ENCODE measurements at regions of chr11 and their contacts with region 1.

Region 1: GRCh38 chr11:727859-728748 is 19.2 kb upstream of the TALDO1 start:
- DNase-seq: peak; percentile 72
- H3K4me3 Mint-ChIP-seq: no peak overlapping the region
- H3K27ac Mint-ChIP-seq: no peak overlapping the region
- H3K4me1 Mint-ChIP-seq: peaks cover 6% of the 10 kb centered on the region
- H3K27me3 Mint-ChIP-seq: peaks cover 9% of the 10 kb centered on the region

Region 2: GRCh38 chr11:447923-448731 is 280.0 kb before region 1 on chr11:
- intact Hi-C with region 1: loop called (anchors 10 kb)
- DNase-seq: peak; percentile 92
- H3K4me3 Mint-ChIP-seq: peak overlapping the region; percentile 88
- H3K27ac Mint-ChIP-seq: peak overlapping the region; percentile 91
- H3K4me1 Mint-ChIP-seq: peaks cover 16% of the 10 kb centered on the region
- H3K27me3 Mint-ChIP-seq: no peaks in the 10 kb centered on the region

Region 3: DNA sequence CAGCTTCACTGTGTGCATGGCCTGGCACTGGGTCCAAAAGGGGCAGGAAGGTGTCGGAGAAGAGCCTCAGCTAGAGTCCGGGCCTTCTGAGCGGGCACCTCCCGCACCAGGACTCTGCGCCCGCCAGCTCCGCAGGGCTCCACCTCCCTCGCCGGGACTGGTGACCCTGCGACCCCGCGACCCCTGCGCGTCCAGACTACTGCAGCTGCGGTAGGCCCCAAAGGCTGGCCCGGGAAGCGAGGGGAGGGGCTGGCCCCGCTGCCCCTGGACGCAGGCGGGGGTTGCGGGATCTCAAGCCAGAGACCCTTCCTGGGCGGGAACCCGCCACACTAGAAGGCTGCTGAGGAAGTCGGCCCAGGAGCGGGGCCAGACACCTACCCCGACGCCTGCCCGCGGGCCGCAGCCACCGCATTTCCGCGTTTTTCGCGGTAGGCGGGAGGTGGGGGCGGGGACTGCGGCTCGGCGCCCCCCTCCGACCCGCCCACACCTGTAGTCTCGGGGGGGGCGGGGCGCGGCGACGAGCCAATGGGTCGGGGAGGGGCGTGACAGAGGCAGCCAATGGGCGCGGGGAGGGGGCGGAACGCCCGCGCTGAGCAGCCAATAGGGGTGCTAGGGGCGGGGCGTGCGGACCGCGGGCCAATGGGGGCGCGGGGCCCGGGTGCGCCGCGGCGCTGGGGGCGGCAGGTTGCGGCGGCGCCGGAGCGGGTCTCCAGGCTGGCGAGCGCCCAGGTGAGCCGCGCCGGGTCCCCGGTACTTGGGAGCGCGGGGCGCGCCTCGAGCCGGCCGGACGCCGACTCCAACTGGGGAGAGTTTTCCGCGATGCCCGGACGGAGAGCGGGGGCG is 167.6 kb before region 1 on chr11 and contains the starts of genes LMNTD2 and RASSF7:
- intact Hi-C with region 1: loop called (anchors 1 kb)
- DNase-seq: peak; percentile 94
- H3K4me3 Mint-ChIP-seq: peak within 1 kb of the TSS; percentile 95
- H3K27ac Mint-ChIP-seq: peak within 1 kb of the TSS; percentile 71
- H3K4me1 Mint-ChIP-seq: peaks cover 11% of the 10 kb centered on the region
- H3K27me3 Mint-ChIP-seq: peaks cover 10% of the 10 kb centered on the region
- total RNA-seq, gene LMNTD2: 0.47 and 0.64 TPM in 2 replicates
- total RNA-seq, gene RASSF7: 15.9 and 19.8 TPM in 2 replicates

Region 4: GRCh38 chr11:621811-622206 is 106.3 kb before region 1 on chr11:
- intact Hi-C with region 1: no loop called
- DNase-seq: no peak
- H3K4me3 Mint-ChIP-seq: no peak overlapping the region
- H3K27ac Mint-ChIP-seq: no peak overlapping the region
- H3K4me1 Mint-ChIP-seq: no peaks in the 10 kb centered on the region
- H3K27me3 Mint-ChIP-seq: peaks cover 6% of the 10 kb centered on the region

Region 5: DNA sequence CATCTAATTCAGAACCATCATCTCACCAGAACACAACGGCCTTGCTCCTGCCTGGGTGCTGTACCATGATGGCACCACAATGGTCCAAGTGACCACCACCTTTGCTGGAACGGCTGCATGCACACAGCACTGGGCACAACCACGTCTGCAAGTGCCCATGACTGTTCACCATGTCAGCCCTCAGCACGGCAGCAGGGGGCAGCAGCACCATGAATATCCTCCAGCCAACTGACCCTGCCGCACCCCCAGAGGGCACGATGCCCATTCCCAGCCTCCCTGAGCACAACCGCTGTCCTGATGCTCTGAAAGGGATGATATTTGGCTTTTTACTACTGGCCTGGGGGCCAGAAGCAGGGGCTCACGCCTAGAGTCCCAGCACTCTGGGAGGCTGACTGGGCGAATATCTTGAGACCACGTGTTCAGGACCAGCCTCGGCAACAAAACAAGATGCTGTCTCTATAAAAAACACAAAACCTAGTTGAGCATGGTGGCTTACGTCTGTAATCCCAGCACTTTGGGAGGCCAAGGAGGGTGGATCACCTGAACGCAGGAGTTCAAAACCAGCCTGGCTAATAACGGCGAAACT is 65.3 kb before region 1 on chr11:
- intact Hi-C with region 1: loop called (anchors 1 kb)
- DNase-seq: no peak
- H3K4me3 Mint-ChIP-seq: no peak overlapping the region
- H3K27ac Mint-ChIP-seq: no peak overlapping the region
- H3K4me1 Mint-ChIP-seq: no peaks in the 10 kb centered on the region
- H3K27me3 Mint-ChIP-seq: no peaks in the 10 kb centered on the region

Region 6: GRCh38 chr11:747158-748006 is 19.3 kb after region 1 on chr11 and contains the start of gene TALDO1:
- intact Hi-C with region 1: loop called (anchors 1 kb)
- DNase-seq: peak; percentile 88
- H3K4me3 Mint-ChIP-seq: peak within 1 kb of the TSS; percentile 91
- H3K27ac Mint-ChIP-seq: peak within 1 kb of the TSS; percentile 90
- H3K4me1 Mint-ChIP-seq: peaks cover 25% of the 10 kb centered on the region
- H3K27me3 Mint-ChIP-seq: no peaks in the 10 kb centered on the region
- total RNA-seq, gene TALDO1: 269 and 283 TPM in 2 replicates

Region 7: DNA sequence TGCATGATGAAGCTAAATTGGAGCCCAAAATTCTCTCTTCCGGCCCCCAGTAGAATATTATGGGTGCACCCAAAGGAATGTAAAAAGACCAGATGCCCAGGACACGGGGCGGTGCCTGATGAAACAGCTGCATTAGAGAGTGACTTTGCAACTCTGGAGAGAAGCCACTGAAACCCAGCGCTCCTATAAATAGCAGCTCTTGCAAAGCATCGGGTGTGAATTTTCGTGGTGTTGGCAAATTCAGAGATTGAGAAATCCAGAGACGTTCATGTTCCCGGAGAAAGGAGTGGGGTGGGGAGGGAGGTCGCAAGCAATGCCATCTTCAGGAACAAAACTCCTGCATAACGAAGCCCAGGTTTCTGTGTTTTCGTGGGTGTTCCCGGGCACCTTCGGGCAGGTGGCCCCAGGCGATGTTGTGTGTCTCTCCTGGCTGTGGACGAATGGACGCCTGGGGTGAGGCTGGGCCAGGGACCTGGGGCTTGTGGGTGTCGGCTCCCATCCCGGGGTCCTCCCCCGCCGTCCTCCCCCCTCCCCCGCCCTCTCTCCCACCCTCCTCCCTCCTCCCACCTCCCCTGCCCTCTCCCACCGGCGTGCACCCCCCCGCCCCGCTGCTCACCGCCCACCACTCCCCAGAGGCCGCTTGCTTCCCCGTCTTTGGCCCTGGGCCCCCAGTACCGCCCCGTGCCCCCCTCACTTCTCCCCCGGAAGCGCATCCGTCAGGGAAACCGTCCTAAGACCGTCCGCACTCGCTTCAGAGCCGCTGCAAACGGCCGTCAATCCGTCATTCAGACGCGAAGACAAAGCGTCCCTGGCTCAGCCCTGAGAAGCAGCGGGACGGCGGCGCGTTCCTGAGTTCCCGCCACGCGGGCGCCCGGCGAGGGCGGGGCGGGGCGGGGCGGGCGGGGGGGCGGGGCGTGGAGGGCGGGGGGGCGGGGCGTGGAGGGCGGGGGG is 608.0 kb after region 1 on chr11:
- intact Hi-C with region 1: no loop called
- DNase-seq: peak; percentile 38
- H3K4me3 Mint-ChIP-seq: peak overlapping the region; percentile 77
- H3K27ac Mint-ChIP-seq: peak overlapping the region; percentile 59
- H3K4me1 Mint-ChIP-seq: peaks cover 8% of the 10 kb centered on the region
- H3K27me3 Mint-ChIP-seq: peaks cover 9% of the 10 kb centered on the region

Region 8: GRCh38 chr11:1442163-1442562 is 714.1 kb after region 1 on chr11:
- intact Hi-C with region 1: no loop called
- DNase-seq: no peak
- H3K4me3 Mint-ChIP-seq: no peak overlapping the region
- H3K27ac Mint-ChIP-seq: no peak overlapping the region
- H3K4me1 Mint-ChIP-seq: no peaks in the 10 kb centered on the region
- H3K27me3 Mint-ChIP-seq: no peaks in the 10 kb centered on the region

Measured in activated T-helper 1 cell treated with anti-CD3 and anti-CD28 coated beads, Interleukin-12 subunit alpha, Interleukin-12 subunit beta, Interleukin-2, Interleukin-4 antibody, amounts not matched to agents 30 ng/mL and 10 ng/mL and 1 ng/mL, durations not matched to agents 14 hours and 24 hours and 36 hours (primary cell).